CD4-positive, alpha-beta T cell (primary cell): ENCODE measurements at regions of chr1 and their contacts with region 1.

Region 1: DNA sequence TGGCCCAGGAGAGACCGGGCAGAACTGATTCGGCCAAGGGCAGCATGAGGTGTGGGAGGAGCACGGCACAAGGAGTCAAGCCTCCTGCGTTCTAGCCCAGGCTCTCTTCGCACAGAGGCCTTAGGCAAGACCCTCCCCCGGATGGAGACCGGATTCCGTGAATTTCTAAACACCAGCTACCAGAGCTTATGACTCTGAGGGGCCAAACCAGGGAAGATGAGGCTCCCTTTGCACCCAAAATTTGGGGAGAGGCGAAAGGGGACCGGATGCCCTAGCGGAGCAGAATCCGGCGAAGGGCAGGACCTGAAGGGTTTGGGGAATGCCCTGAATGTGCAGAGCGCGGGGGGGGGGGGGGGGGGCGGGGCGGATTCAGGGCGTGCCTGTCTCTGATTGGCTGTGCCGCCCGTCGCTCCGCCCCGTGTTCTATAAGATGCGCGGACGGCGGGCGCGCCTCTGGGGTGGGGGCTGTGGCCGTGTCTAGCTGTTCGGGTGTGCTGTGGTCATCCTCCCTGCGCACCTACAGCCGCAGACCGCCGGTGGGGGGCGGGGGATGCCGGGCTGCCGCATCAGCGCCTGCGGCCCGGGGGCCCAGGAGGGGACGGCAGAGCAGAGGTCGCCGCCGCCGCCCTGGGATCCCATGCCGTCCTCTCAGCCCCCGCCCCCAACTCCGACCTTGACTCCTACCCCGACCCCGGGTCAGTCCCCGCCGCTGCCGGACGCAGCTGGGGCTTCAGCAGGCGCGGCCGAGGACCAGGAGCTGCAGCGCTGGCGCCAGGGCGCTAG is at the start of gene TRNP1:
- DNase-seq: peak; percentile 39 to 87 (median 59)
- ATAC-seq: peak; percentile 60
- H3K4me3 ChIP-seq: peak within 1 kb of the TSS; percentile 36
- H3K4me3 Mint-ChIP-seq: peak within 1 kb of the TSS; percentile 89
- H3K27ac ChIP-seq: no peak within 1 kb of the TSS
- H3K27ac Mint-ChIP-seq: no peak within 1 kb of the TSS
- H3K4me1 ChIP-seq: peaks cover 23% of the 10 kb centered on the region
- H3K4me1 Mint-ChIP-seq: peaks cover 17% of the 10 kb centered on the region
- H3K27me3 ChIP-seq: peaks cover 42 to 48% of the 10 kb centered on the region in 2 experiments
- H3K27me3 Mint-ChIP-seq: peaks cover 68% of the 10 kb centered on the region
- CTCF ChIP-seq: no peak
- total RNA-seq, gene TRNP1: 0.19 to 0.20 TPM

Region 2: DNA sequence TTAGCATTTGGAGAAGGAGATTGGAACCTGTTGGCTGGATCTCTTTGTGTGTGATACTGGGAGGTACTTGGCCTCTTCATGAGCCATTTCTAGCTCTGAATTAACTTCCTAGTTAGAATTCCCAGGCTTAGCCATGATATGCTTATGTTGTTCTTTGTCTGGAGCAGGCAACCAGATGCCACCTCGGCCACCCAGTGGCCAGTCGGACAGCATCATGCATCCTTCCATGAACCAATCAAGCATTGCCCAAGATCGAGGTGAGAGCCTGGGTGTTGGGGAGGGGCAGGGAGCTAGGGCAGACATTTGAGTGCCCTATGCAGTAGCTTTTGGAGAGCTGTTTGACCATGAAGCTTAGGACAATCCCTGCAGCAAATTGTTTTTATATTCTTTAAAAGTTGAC is 232.2 kb before region 1 on chr1:
- CTCF ChIA-PET with region 1: no interaction called
- POLR2A ChIA-PET with region 1: no interaction called
- intact Hi-C with region 1: no loop called
- DNase-seq: peak in 2 of 14 experiments; percentile 28 to 42
- ATAC-seq: no peak
- H3K4me3 ChIP-seq: no peak overlapping the region
- H3K4me3 Mint-ChIP-seq: no peak overlapping the region
- H3K27ac ChIP-seq: no peak overlapping the region
- H3K27ac Mint-ChIP-seq: peak overlapping the region; percentile 65
- H3K4me1 ChIP-seq: peaks cover 7% of the 10 kb centered on the region
- H3K4me1 Mint-ChIP-seq: peaks cover 19% of the 10 kb centered on the region
- H3K27me3 ChIP-seq: no peaks in the 10 kb centered on the region
- H3K27me3 Mint-ChIP-seq: no peaks in the 10 kb centered on the region
- CTCF ChIP-seq: no peak

Region 3: GRCh38 chr1:27005648-27006496 is 12.4 kb after region 1 on chr1:
- CTCF ChIA-PET with region 1: no interaction called
- POLR2A ChIA-PET with region 1: no interaction called
- intact Hi-C with region 1: no loop called
- DNase-seq: no peak
- ATAC-seq: no peak
- H3K4me3 ChIP-seq: no peak overlapping the region
- H3K4me3 Mint-ChIP-seq: no peak overlapping the region
- H3K27ac ChIP-seq: no peak overlapping the region
- H3K27ac Mint-ChIP-seq: no peak overlapping the region
- H3K4me1 ChIP-seq: no peaks in the 10 kb centered on the region
- H3K4me1 Mint-ChIP-seq: no peaks in the 10 kb centered on the region
- H3K27me3 ChIP-seq: peaks cover 0 to 6% of the 10 kb centered on the region in 2 experiments
- H3K27me3 Mint-ChIP-seq: peaks cover 23% of the 10 kb centered on the region
- CTCF ChIP-seq: no peak

Region 4: GRCh38 chr1:27097484-27097917 is 104.1 kb after region 1 on chr1:
- CTCF ChIA-PET with region 1: no interaction called
- POLR2A ChIA-PET with region 1: no interaction called
- intact Hi-C with region 1: loop called (anchors 1 to 2 kb)
- DNase-seq: peak; percentile 51 to 86 (median 65)
- ATAC-seq: peak; percentile 96
- H3K4me3 ChIP-seq: no peak overlapping the region
- H3K4me3 Mint-ChIP-seq: no peak overlapping the region
- H3K27ac ChIP-seq: no peak overlapping the region
- H3K27ac Mint-ChIP-seq: no peak overlapping the region
- H3K4me1 ChIP-seq: peaks cover 6% of the 10 kb centered on the region
- H3K4me1 Mint-ChIP-seq: no peaks in the 10 kb centered on the region
- H3K27me3 ChIP-seq: no peaks in the 10 kb centered on the region
- H3K27me3 Mint-ChIP-seq: no peaks in the 10 kb centered on the region
- CTCF ChIP-seq: peak; percentile 95

Region 5: DNA sequence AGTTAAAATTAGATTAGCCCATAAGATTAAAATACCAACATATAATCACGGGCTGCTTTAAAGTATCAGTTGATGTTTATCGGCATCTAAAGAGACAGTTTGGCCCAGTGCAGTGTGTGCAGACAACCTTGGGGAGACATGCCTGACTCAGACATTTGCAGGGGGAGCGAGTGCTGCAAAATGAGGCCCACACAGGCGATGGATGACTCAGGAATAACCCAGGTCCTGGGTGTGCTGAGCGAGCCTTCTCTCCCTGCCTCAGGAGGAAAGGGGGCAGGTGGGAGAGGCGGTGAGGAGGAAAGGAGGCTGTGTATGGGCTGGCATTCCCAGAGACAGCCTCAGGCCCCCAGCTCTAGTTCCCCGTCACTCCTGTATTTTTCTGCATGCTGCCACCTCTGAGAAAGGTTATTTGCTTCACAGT is 152.5 kb after region 1 on chr1:
- CTCF ChIA-PET with region 1: no interaction called
- POLR2A ChIA-PET with region 1: no interaction called
- intact Hi-C with region 1: no loop called
- DNase-seq: no peak
- ATAC-seq: no peak
- H3K4me3 ChIP-seq: no peak overlapping the region
- H3K4me3 Mint-ChIP-seq: no peak overlapping the region
- H3K27ac ChIP-seq: no peak overlapping the region
- H3K27ac Mint-ChIP-seq: no peak overlapping the region
- H3K4me1 ChIP-seq: peaks cover 45% of the 10 kb centered on the region
- H3K4me1 Mint-ChIP-seq: peaks cover 64% of the 10 kb centered on the region
- H3K27me3 ChIP-seq: no peaks in the 10 kb centered on the region
- H3K27me3 Mint-ChIP-seq: no peaks in the 10 kb centered on the region
- CTCF ChIP-seq: no peak